AG04449 (cell line): ENCODE measurements at regions of chr10 and their contacts with region 1.

Region 1: DNA sequence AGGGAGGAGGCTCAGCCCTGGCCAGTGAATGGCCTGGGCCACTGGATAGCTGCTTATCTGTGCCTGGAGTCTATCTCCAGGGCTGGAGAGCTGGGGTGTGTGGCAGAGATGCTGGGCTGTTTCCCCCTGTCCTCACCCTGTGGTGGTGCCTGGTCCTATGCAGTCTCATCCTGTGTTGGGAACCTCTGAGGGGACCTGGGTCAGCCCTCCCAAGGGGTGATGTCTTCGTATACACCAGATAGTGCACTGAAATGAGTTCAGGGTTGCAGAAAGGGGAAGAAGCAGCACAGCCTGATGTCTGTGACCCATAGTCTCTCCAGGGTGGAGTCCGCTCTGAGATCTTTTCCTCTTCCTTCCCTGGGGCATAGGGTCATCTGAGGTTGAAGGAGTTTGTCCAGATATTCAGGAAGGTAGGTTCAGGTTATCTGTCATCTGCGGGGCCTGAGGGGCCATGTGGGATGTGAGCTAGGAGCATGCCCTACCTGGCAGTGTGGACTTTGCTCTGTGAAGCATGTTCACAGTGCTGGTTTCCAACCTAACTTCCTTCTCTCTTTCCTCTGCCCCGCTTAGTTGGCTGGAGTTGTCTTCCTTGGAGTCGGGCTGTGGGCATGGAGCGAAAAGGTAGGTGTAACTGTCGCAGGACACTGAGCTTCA is 33.4 kb upstream of the SH2D4B start:
- DNase-seq: no peak
- H3K4me3 ChIP-seq: no peak overlapping the region
- CTCF ChIP-seq: no peak

Region 2: GRCh38 chr10:80421707-80422536 is 82.4 kb before region 1 on chr10:
- CTCF ChIA-PET with region 1: interaction called, 10 read pairs
- POLR2A ChIA-PET with region 1: no interaction called
- DNase-seq: no peak
- H3K4me3 ChIP-seq: no peak overlapping the region
- CTCF ChIP-seq: no peak

Region 3: GRCh38 chr10:80480852-80481251 is 23.4 kb before region 1 on chr10:
- CTCF ChIA-PET with region 1: interaction called, 23 read pairs
- POLR2A ChIA-PET with region 1: no interaction called
- DNase-seq: no peak
- H3K4me3 ChIP-seq: no peak overlapping the region
- CTCF ChIP-seq: no peak

Region 4: GRCh38 chr10:80487791-80488538 is 16.3 kb before region 1 on chr10:
- CTCF ChIA-PET with region 1: interaction called, 23 read pairs
- POLR2A ChIA-PET with region 1: no interaction called
- DNase-seq: no peak
- H3K4me3 ChIP-seq: no peak overlapping the region
- CTCF ChIP-seq: no peak

Region 5: GRCh38 chr10:80493522-80494051 is 10.7 kb before region 1 on chr10:
- CTCF ChIA-PET with region 1: interaction called, 70 read pairs
- POLR2A ChIA-PET with region 1: no interaction called
- DNase-seq: peak; percentile 36
- H3K4me3 ChIP-seq: no peak overlapping the region; the same call in 1 of the 2 replicates
- CTCF ChIP-seq: no peak

Region 6: DNA sequence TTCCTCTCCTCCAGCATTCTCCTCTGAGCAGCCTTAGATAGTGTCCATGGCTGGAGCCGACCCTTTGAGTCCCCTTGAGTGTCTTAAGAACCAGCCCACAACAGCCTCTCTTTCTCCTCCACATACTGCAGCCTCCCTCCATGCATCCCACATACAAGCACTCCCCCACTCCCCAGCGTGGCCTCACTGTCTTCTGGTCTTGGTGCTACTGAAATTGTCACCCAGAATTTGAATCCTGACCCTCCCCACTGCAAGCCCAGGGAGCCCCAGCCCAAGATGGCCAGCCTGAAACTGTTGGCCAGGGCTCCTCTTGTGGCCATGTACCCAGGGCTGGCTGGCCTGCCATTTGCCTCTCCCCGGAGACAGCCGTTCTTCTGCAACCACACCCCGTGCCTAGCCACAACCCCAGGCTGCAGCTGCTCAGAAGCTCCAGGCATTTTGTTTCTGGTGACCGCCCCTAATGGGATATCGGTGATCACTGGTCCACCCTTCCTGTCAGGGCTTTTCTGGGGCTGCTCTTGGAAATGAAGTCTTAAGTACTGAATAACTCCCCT is 14.6 kb after region 1 on chr10:
- CTCF ChIA-PET with region 1: interaction called, 11 read pairs
- POLR2A ChIA-PET with region 1: no interaction called
- DNase-seq: no peak
- H3K4me3 ChIP-seq: no peak overlapping the region
- CTCF ChIP-seq: no peak

Region 7: GRCh38 chr10:80526742-80527141 is 22.5 kb after region 1 on chr10:
- CTCF ChIA-PET with region 1: interaction called, 11 read pairs
- POLR2A ChIA-PET with region 1: no interaction called
- DNase-seq: no peak
- H3K4me3 ChIP-seq: no peak overlapping the region
- CTCF ChIP-seq: no peak